ENCODE measurements at regions of chr15 and their contacts with region 1.

Region 1: GRCh38 chr15:43824302-43825246 is at the start of gene MFAP1:
- DNase-seq: peak; percentile 88 to 95 (median 93)
- H3K4me3 ChIP-seq: peak within 1 kb of the TSS; percentile 92 to 100
- H3K4me3 Mint-ChIP-seq: peak within 1 kb of the TSS; percentile 96 to 99 (median 98)
- H3K27ac ChIP-seq: peak within 1 kb of the TSS; percentile 99
- H3K27ac Mint-ChIP-seq: peak within 1 kb of the TSS; percentile 92 to 99 (median 99)
- H3K4me1 ChIP-seq: peaks cover 67% of the 10 kb centered on the region
- H3K4me1 Mint-ChIP-seq: peaks cover 29 to 71% (median 52%) of the 10 kb centered on the region in 4 donors
- H3K27me3 ChIP-seq: no peaks in the 10 kb centered on the region
- H3K27me3 Mint-ChIP-seq: no peaks in the 10 kb centered on the region
- total RNA-seq, gene MFAP1: 24.9 to 25.9 TPM

Region 2: GRCh38 chr15:43749690-43750345 is 74.8 kb before region 1 on chr15:
- CTCF ChIA-PET with region 1: no interaction called
- POLR2A ChIA-PET with region 1: interaction called, 12 read pairs
- intact Hi-C with region 1: loop called (anchors 1 kb)
- DNase-seq: peak; percentile 75 to 86 (median 82)
- H3K4me3 ChIP-seq: peak overlapping the region in 1 of 2 donors; percentile 49
- H3K4me3 Mint-ChIP-seq: peak overlapping the region; percentile 69 to 87 (median 82)
- H3K27ac ChIP-seq: peak overlapping the region; percentile 59
- H3K27ac Mint-ChIP-seq: peak overlapping the region; percentile 91 to 96 (median 94)
- H3K4me1 ChIP-seq: peaks cover 66% of the 10 kb centered on the region
- H3K4me1 Mint-ChIP-seq: peaks cover 27 to 70% (median 47%) of the 10 kb centered on the region in 4 donors
- H3K27me3 ChIP-seq: no peaks in the 10 kb centered on the region
- H3K27me3 Mint-ChIP-seq: no peaks in the 10 kb centered on the region

Region 3: GRCh38 chr15:43776718-43777583 is 47.6 kb before region 1 on chr15 and contains the start of gene ELL3:
- CTCF ChIA-PET with region 1: interaction called, 4 read pairs
- POLR2A ChIA-PET with region 1: interaction called, 7 read pairs
- intact Hi-C with region 1: loop called (anchors 2 kb)
- DNase-seq: peak; percentile 85 to 91 (median 86)
- H3K4me3 ChIP-seq: peak within 1 kb of the TSS; percentile 82 to 95
- H3K4me3 Mint-ChIP-seq: peak within 1 kb of the TSS; percentile 93 to 96 (median 94)
- H3K27ac ChIP-seq: peak within 1 kb of the TSS; percentile 66
- H3K27ac Mint-ChIP-seq: peak within 1 kb of the TSS; percentile 94 to 97 (median 95)
- H3K4me1 ChIP-seq: peaks cover 16% of the 10 kb centered on the region
- H3K4me1 Mint-ChIP-seq: peaks cover 8 to 18% (median 11%) of the 10 kb centered on the region in 4 donors
- H3K27me3 ChIP-seq: no peaks in the 10 kb centered on the region
- H3K27me3 Mint-ChIP-seq: no peaks in the 10 kb centered on the region
- total RNA-seq, gene ELL3: 1.3 to 1.8 TPM

Region 4: GRCh38 chr15:43791993-43792760 is 32.4 kb before region 1 on chr15 and contains the start of gene SERF2:
- CTCF ChIA-PET with region 1: interaction called, 3 read pairs
- POLR2A ChIA-PET with region 1: interaction called, 28 read pairs
- intact Hi-C with region 1: loop called (anchors 2 kb)
- DNase-seq: peak; percentile 97 to 100 (median 98)
- H3K4me3 ChIP-seq: peak within 1 kb of the TSS; percentile 97
- H3K4me3 Mint-ChIP-seq: peak within 1 kb of the TSS; percentile 93 to 97 (median 96)
- H3K27ac ChIP-seq: peak within 1 kb of the TSS; percentile 100
- H3K27ac Mint-ChIP-seq: peak within 1 kb of the TSS; percentile 97 to 99 (median 98)
- H3K4me1 ChIP-seq: peaks cover 36% of the 10 kb centered on the region
- H3K4me1 Mint-ChIP-seq: peaks cover 20 to 56% (median 37%) of the 10 kb centered on the region in 4 donors
- H3K27me3 ChIP-seq: no peaks in the 10 kb centered on the region
- H3K27me3 Mint-ChIP-seq: no peaks in the 10 kb centered on the region
- total RNA-seq, gene SERF2: 564 to 596 TPM

Region 5: DNA sequence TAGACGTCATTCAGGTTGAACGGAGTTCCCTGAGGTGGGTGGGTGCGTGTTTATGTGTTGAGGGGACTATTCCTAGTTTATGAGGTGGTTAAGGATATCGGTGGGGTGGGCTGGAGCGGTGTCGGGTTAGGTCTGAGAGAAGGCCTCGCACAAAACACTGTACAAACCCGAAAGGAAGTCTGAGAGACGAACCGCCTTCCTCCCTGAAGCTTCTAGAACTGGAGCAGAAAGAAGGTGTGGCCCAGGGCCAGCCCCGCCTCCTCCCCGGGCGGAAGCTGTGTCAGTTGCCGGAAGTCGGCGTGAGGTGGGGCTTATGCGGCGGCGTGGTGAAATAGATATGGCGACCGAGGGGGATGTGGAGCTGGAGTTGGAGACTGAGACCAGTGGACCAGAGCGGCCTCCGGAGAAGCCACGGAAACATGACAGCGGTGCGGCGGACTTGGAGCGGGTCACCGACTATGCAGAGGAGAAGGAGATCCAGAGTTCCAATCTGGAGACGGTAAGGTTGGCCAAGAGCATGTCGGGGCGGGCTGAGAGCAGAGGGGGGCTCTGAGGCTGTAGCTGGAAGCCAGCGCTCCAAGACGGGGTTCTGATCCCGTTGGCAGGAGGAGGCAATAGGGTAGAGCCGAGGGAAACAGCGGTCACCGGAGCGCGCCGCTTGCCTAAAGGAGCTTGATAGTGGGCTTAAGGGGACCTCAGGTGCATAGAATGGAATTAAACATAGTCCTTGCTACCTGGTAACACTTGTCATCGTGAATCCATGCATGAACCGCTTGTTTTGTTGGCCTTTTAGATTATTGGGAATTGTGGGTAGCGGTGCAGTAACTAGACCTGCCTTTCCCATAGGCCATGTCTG is 24.1 kb before region 1 on chr15 and contains the start of gene HYPK:
- CTCF ChIA-PET with region 1: interaction called, 5 read pairs
- POLR2A ChIA-PET with region 1: interaction called, 92 read pairs
- intact Hi-C with region 1: loop called (anchors 1 kb)
- DNase-seq: peak; percentile 90 to 94 (median 91)
- H3K4me3 ChIP-seq: peak within 1 kb of the TSS; percentile 96 to 97
- H3K4me3 Mint-ChIP-seq: peak within 1 kb of the TSS; percentile 98 to 100 (median 100)
- H3K27ac ChIP-seq: peak within 1 kb of the TSS; percentile 76
- H3K27ac Mint-ChIP-seq: peak within 1 kb of the TSS; percentile 92 to 100 (median 99)
- H3K4me1 ChIP-seq: peaks cover 32% of the 10 kb centered on the region
- H3K4me1 Mint-ChIP-seq: peaks cover 16 to 55% (median 39%) of the 10 kb centered on the region in 4 donors
- H3K27me3 ChIP-seq: no peaks in the 10 kb centered on the region
- H3K27me3 Mint-ChIP-seq: no peaks in the 10 kb centered on the region
- total RNA-seq, gene HYPK: 23.6 to 24.6 TPM

Region 6: DNA sequence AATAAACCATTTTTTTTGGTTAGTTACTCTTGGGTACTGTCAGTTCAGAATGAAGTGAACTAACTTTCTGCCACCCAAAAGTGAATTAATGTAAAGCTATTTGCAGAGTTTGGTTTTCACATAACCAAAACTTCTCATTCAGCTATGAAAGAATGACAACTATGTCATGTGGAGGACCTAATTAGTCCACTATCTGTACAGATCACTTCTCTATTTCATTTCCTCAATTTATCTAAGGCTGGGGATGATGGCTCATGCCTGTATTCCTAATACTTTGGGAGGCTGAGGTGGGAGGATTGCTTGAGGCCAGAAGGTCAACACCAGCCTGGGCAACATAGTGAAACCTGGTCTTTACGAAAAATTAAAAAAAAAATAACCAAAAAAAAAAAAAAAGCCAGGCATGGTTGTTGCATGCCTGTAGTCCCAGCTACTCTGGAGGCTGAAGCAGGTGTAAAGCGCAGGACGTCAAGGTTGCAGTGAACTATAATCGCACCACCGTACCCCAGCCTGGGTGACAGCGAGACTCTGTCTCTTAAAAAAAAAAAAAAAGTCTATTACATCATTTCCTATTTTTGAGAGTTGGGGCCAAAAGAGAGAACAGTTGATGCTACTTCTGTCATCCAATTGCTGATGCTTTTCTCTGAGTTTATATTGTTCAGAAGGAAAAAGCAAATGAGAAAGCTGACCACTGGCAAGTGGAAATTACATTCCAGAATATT is 15.5 kb before region 1 on chr15:
- CTCF ChIA-PET with region 1: interaction called, 10 read pairs
- POLR2A ChIA-PET with region 1: interaction called, 4 read pairs
- intact Hi-C with region 1: no loop called
- DNase-seq: no peak
- H3K4me3 ChIP-seq: no peak overlapping the region
- H3K4me3 Mint-ChIP-seq: no peak overlapping the region
- H3K27ac ChIP-seq: no peak overlapping the region
- H3K27ac Mint-ChIP-seq: peak overlapping the region in 3 of 7 donors; percentile 13 to 46 (median 25)
- H3K4me1 ChIP-seq: no peaks in the 10 kb centered on the region
- H3K4me1 Mint-ChIP-seq: no peaks in the 10 kb centered on the region
- H3K27me3 ChIP-seq: no peaks in the 10 kb centered on the region
- H3K27me3 Mint-ChIP-seq: no peaks in the 10 kb centered on the region

Region 7: GRCh38 chr15:43930079-43930478 is 105.5 kb after region 1 on chr15:
- CTCF ChIA-PET with region 1: no interaction called
- POLR2A ChIA-PET with region 1: no interaction called
- intact Hi-C with region 1: no loop called
- DNase-seq: no peak
- H3K4me3 ChIP-seq: no peak overlapping the region
- H3K4me3 Mint-ChIP-seq: no peak overlapping the region
- H3K27ac ChIP-seq: no peak overlapping the region
- H3K27ac Mint-ChIP-seq: peak overlapping the region in 1 of 7 donors; percentile 14
- H3K4me1 ChIP-seq: no peaks in the 10 kb centered on the region
- H3K4me1 Mint-ChIP-seq: no peaks in the 10 kb centered on the region
- H3K27me3 ChIP-seq: no peaks in the 10 kb centered on the region
- H3K27me3 Mint-ChIP-seq: peaks cover 6 to 9% of the 10 kb centered on the region in 2 donors

Region 8: DNA sequence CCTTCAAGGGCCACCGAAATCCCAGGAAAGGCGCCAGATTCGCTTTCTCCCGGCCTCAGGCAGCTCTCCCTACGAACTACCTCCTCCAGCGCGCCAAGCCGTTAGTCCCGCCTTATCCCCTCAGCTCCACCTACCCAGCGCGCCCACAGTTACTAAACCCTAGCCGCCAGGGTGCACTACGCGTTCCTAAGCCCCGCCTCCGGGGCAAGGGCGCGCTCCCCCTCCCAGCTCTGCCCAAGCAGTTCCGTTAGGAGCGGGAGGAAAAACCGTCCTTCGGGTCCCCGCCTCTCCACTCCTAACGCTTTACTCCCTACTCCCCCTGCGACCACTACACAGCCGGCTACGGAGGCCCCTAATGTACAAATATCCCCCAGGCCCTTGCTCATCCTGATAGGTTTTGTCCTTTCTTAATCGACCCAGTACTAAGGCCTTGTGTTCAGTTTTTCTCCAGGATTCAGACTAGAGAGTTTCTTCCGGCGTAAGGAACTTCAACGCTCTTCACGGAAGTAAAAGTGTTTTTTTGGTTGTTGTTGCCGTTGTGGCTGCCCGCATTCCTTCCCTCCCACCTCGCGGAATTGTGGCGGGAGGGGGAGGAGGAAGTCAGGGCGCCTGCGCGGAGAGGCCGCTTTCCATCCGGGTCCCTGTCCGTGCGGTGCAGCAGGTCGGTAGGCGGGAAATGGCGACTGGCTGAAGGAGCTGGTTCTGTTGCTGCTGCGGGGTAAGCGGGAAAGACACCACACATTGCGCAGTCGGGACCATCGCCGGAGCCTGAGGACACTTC is 602.6 kb after region 1 on chr15 and contains the start of gene CTDSPL2:
- CTCF ChIA-PET with region 1: no interaction called
- POLR2A ChIA-PET with region 1: interaction called, 4 read pairs
- intact Hi-C with region 1: loop called (anchors 5 kb)
- DNase-seq: peak; percentile 94 to 96 (median 95)
- H3K4me3 ChIP-seq: peak within 1 kb of the TSS; percentile 57 to 96
- H3K4me3 Mint-ChIP-seq: peak within 1 kb of the TSS; percentile 95 to 100 (median 98)
- H3K27ac ChIP-seq: peak within 1 kb of the TSS; percentile 99
- H3K27ac Mint-ChIP-seq: peak within 1 kb of the TSS; percentile 98 to 100 (median 99)
- H3K4me1 ChIP-seq: peaks cover 38% of the 10 kb centered on the region
- H3K4me1 Mint-ChIP-seq: peaks cover 32 to 66% (median 44%) of the 10 kb centered on the region in 4 donors
- H3K27me3 ChIP-seq: no peaks in the 10 kb centered on the region
- H3K27me3 Mint-ChIP-seq: peaks cover 0 to 2% of the 10 kb centered on the region in 2 donors
- total RNA-seq, gene CTDSPL2: 72.0 to 74.4 TPM